Naive thymus-derived CD4-positive, alpha-beta T cell (primary cell): ENCODE measurements at regions of chr5 and their contacts with region 1.

Region 1: DNA sequence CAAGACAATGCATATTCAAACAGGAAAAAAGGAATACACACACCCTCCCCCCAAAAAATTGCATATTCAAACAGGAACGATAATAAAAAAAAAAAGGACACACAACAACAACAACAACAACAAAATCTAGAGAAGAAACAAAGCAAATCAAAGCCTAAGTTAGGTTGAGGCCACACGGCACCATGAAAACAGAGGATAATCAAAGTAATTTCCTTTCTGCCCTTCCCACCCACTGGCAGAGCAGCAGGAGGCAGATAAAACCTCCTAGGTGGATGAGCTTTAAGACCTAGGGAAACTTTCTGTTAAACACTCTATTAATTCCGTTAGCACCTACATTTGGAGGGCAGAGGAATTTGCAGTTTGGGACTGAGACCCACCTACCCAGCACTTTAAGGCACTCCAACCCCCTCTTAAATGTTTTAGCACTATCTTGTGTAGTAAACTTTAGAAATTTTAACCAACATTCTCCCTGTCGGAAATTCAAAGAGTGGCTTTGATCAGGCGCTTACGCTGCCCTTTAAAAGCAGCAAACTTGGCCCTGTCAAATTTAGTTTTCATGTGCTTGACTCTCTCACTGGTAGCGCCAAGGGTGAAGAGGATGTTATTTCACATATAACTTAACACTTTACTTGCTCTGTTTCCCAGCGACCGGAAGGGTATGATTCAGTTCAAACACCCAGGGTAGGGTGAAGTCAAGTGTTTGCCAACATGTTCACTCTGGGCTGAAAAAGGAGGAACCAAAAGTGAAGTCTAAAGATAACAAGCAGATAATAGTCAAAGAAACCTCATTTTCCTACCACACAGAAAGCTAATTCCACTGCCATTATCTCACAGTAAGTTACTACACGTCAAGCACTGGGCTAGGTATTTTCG is 9.2 kb downstream of the ENC1 start:
- DNase-seq: peak in 7 of 9 donors; percentile 49 to 87 (median 65)
- ATAC-seq: peak; percentile 85
- H3K4me3 ChIP-seq: peak overlapping the region; percentile 8
- H3K4me3 Mint-ChIP-seq: peak overlapping the region; percentile 16 to 81 (median 58)
- H3K27ac ChIP-seq: peak overlapping the region; percentile 79
- H3K27ac Mint-ChIP-seq: peak overlapping the region; percentile 53 to 96 (median 84)
- H3K4me1 ChIP-seq: peaks cover 25 to 37% of the 10 kb centered on the region in 2 donors
- H3K4me1 Mint-ChIP-seq: peaks cover 16 to 77% (median 19%) of the 10 kb centered on the region in 7 donors
- H3K27me3 ChIP-seq: no peaks in the 10 kb centered on the region
- H3K27me3 Mint-ChIP-seq: peaks cover 0 to 10% (median 6%) of the 10 kb centered on the region in 5 donors

Region 2: DNA sequence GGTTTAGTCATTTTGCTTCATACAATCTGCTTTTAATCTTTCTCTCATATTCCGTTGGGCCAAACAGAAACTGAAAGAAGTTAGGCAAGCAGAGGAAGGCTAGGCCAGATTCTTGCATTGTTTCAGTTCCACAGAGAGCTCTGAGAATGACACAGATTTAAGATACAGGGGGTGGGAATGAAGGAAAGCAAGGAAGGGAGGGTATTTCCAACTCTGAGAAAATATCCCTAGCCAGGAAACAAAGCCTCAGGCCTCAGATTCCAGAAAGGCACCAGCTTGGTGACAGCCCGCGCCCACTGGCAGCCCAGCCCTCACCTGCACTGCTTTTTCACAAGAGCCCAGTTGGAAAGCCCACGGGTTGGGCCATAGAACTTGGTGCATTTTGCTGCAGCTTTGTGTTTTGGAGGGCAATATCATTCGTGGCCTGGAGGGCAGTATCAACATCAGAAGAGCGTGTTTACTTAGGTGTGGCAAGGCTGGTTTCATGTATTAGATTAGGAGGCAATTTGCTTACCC is 54.3 kb before region 1 on chr5:
- CTCF ChIA-PET with region 1: interaction called, 7 read pairs
- POLR2A ChIA-PET with region 1: no interaction called
- intact Hi-C with region 1: loop called (anchors 2 kb)
- DNase-seq: peak in 7 of 9 donors; percentile 6 to 43 (median 24)
- ATAC-seq: peak; percentile 41
- H3K4me3 ChIP-seq: peak overlapping the region; percentile 48
- H3K4me3 Mint-ChIP-seq: peak overlapping the region; percentile 41 to 92 (median 71)
- H3K27ac ChIP-seq: peak overlapping the region; percentile 8
- H3K27ac Mint-ChIP-seq: peak overlapping the region; percentile 51 to 97 (median 81)
- H3K4me1 ChIP-seq: peaks cover 21 to 22% of the 10 kb centered on the region in 2 donors
- H3K4me1 Mint-ChIP-seq: peaks cover 10 to 51% (median 30%) of the 10 kb centered on the region in 7 donors
- H3K27me3 ChIP-seq: no peaks in the 10 kb centered on the region
- H3K27me3 Mint-ChIP-seq: peaks cover 0 to 12% (median 0%) of the 10 kb centered on the region in 5 donors